ENCODE measurements at regions of chr18 and their contacts with region 1.

Region 1: GRCh38 chr18:37435996-37436395 is 129.6 kb downstream of the CELF4 start:
- DNase-seq: no peak
- ATAC-seq: no peak

Region 2: DNA sequence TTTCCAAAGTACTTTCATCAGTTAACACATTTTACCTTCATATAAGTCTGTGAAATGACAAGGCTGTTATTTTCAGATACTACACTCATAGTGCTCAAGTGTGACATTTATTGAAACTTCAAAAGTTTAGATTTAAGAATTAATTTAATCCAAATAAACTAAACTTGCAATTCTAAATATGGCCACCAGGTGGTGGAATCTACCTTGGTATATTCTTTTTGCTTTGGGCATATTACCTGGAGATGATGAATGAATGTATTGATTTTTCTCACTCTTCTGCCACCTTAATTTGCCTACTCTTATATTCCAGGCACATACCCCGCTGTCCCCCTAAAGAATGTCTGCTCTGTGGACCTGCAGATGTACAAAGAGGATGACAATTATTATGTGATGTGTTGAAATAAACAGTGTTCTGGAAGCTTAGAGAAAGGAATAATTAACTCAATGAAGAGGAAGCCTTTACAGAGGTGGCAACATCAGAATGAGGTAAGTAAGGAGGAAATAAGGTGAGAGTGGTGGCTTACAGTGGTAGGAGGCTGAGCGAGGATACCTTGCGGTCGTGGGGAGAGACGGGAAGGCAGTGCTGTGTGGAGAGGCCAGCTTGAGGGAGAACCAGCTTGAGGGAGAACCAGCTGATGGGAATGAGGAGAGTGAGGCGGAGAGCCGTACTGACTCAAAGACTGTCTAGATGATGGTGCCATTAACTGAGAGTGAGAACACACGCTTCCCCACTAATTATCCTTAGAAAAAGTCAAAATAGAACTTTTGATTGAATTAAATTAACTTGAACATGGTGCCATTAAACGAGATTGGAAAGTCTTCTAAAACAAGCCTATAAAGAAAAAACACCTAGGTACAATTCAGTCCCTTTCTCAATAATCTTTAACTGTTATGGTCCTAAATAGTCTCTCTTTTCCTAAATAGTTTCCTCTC is 49.9 kb before region 1 on chr18:
- intact Hi-C with region 1: loop called (anchors 5 kb)
- DNase-seq: no peak
- ATAC-seq: no peak

Region 3: DNA sequence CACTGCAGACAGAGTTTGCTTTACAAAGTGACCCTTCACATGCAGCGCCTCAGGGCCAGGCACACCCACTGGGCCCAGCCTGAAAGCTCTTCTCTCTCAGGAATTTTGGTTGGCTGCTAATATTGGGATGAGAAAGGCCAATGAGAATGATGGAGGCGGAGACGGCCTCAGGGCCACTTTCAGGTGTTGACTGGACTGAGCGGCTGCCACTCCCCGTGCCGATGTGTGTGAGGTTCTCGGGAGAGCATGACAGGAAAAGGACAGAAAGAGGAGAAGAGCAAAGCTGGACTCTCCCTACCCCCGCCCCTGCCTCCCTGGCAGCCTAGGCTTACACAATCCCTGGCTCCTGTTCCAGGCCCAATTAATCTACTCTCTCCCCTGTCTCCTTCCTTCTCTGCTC is 26.1 kb before region 1 on chr18:
- intact Hi-C with region 1: loop called (anchors 5 kb)
- DNase-seq: no peak
- ATAC-seq: peak; percentile 86

Region 4: GRCh38 chr18:37502036-37502435 is 66.0 kb after region 1 on chr18:
- intact Hi-C with region 1: no loop called
- DNase-seq: no peak
- ATAC-seq: no peak

Region 5: GRCh38 chr18:37537868-37538525 is 102.0 kb after region 1 on chr18:
- intact Hi-C with region 1: loop called (anchors 5 kb)
- DNase-seq: peak; percentile 84
- ATAC-seq: peak; percentile 82

Measured in Right ventricle myocardium inferior (tissue), 1 donor.